OCI-LY7 (cell line): ENCODE measurements at regions of chr3 and their contacts with region 1.

Region 1: DNA sequence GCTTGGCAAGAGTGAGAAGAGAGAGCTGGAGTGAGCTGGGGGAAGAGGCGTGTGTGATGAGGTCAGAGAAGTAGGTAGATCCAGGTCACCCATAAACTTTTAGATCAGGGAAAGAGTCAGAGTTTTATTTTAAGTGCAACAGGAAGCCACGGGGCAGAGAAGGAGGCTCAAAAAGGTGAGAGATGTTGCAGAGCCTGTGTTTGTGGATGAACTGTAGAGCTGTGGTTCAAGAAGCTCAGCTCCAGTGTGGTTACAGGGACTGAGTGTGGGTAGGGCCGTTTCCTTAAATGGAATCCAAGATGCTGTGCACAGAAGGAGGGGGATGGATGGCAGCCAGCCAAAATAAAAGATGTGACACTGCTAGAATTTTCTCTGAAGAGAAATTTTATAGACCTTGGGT is 337.2 kb downstream of the SATB1 start:
- DNase-seq: no peak
- H3K4me3 ChIP-seq: no peak overlapping the region
- H3K27ac ChIP-seq: no peak overlapping the region
- H3K4me1 ChIP-seq: no peaks in the 10 kb centered on the region
- CTCF ChIP-seq: no peak

Region 2: DNA sequence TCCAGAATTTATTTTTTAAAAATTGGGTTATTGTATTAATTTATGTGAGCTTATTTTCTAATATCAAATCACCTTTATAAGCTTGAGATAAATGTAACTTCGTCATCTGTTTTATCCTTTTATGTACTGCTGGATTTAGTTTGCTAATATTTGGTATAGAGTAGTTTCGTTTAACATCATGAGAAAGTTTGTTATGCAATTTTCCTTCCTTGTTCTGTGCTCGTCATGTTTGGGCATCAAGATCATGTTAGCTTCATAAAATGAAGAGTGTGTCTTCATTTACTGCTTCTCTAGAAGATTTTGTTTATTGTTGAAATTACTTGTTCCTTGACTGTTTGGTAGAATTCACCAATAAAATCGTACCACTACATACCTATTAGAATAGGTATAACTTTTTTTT is 599.3 kb after region 1 on chr3:
- CTCF ChIA-PET with region 1: no interaction called
- POLR2A ChIA-PET with region 1: interaction called, 10 read pairs
- intact Hi-C with region 1: no loop called
- DNase-seq: no peak
- H3K4me3 ChIP-seq: no peak overlapping the region
- H3K27ac ChIP-seq: no peak overlapping the region
- H3K4me1 ChIP-seq: no peaks in the 10 kb centered on the region
- CTCF ChIP-seq: no peak